AG04449 (cell line): ENCODE measurements at regions of chr10 and their contacts with region 1.

Region 1: DNA sequence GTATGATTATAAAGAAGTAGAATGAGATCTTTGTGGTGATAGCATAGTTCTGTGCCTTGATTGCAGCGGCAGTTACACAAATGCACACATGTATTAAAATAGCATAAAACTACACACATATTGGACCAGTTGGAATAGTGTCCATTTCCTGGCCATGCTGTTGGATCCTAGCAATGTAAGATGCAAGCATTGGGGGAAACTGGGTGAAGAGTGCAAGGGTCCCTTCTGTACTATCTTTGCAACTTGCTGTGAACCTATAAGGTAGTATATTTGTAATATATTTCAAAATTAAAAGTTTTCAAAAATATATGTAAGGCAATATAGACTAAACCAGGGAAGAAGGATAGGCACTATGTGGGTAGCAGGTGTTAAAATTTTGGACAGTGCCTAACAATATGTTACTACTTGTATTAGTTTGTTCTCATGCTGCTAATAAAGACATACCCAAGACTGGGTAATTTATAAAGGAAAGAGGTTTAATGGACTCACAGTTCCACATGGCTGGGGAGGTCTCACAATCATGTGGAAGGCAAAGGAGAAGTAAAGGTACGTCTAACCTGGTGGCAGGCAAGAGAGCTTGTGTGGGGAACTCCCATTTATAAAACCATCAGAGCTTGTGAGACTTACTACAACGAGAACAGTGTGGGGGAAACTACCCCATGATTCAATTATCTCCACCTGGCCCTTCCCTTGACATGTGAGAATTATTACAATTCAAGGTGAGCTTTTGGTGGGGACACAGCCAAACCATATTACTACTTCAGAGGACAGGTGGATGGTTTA is 71.4 kb downstream of the RGS10 start:
- DNase-seq: no peak
- H3K4me3 ChIP-seq: no peak overlapping the region
- CTCF ChIP-seq: no peak

Region 2: DNA sequence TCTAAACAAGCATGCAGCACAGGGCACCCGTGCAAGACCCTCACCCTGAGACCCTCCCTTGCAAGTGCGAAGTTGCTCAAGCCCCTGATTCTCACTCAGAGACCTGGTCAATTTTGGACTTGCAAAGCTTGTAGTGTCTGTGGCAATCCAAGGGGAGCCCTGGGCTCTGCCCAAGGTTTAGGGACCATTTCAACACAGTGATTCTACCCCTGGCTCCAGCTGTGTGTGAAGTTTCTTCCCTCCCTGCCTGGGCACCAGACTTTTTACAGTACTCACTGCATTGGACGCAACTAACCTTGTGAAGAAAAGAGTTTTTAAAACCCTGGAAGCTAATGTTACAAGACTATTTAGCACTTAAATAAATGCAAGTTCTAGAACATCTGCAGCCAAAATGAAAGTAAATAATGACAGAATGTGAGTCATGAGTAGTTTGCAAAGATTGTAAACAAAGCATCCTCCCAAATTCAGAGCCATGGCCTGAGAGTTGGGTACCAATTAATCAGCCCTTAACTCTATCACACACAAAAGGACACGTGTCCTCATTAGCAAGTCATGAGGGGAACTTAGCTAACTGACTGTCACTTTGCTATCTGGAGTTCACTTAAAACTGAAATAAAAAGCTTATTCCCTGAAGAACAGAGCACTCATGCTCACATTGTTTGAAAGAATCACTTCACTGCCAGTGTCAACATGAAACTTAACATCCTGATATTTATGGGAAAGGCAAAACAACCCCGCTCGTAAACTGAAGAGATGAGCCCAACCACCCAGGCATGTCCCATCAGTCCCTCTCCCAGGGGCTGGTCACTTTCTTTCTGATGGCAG is 23.3 kb after region 1 on chr10:
- CTCF ChIA-PET with region 1: interaction called, 16 read pairs
- POLR2A ChIA-PET with region 1: no interaction called
- DNase-seq: no peak
- H3K4me3 ChIP-seq: no peak overlapping the region
- CTCF ChIP-seq: no peak

Region 3: GRCh38 chr10:119596537-119597404 is 125.7 kb after region 1 on chr10 and contains the start of gene TIAL1:
- CTCF ChIA-PET with region 1: no interaction called
- POLR2A ChIA-PET with region 1: no interaction called
- DNase-seq: peak; percentile 98
- H3K4me3 ChIP-seq: peak within 1 kb of the TSS; percentile 95
- CTCF ChIP-seq: no peak